Right cardiac atrium (tissue), 5 donors: ENCODE measurements at regions of chr3 and their contacts with region 1.

Region 1: GRCh38 chr3:158918008-158918407 is 116.2 kb downstream of the MFSD1 start:
- DNase-seq: peak; percentile 18 to 49 (median 43)
- ATAC-seq: peak in 1 of 2 donors; percentile 49
- H3K4me3 ChIP-seq: no peak overlapping the region
- H3K27ac ChIP-seq: no peak overlapping the region
- H3K4me1 ChIP-seq: no peaks in the 10 kb centered on the region
- H3K27me3 ChIP-seq: no peaks in the 10 kb centered on the region

Region 2: GRCh38 chr3:159252772-159253384 is 334.9 kb after region 1 on chr3:
- intact Hi-C with region 1: loop called in 3 of 4 experiments (anchors 5 to 10 kb)
- DNase-seq: no peak
- ATAC-seq: no peak
- H3K4me3 ChIP-seq: no peak overlapping the region
- H3K27ac ChIP-seq: no peak overlapping the region
- H3K4me1 ChIP-seq: no peaks in the 10 kb centered on the region
- H3K27me3 ChIP-seq: no peaks in the 10 kb centered on the region